ENCODE measurements at regions of chr4 and their contacts with region 1.

Region 1: DNA sequence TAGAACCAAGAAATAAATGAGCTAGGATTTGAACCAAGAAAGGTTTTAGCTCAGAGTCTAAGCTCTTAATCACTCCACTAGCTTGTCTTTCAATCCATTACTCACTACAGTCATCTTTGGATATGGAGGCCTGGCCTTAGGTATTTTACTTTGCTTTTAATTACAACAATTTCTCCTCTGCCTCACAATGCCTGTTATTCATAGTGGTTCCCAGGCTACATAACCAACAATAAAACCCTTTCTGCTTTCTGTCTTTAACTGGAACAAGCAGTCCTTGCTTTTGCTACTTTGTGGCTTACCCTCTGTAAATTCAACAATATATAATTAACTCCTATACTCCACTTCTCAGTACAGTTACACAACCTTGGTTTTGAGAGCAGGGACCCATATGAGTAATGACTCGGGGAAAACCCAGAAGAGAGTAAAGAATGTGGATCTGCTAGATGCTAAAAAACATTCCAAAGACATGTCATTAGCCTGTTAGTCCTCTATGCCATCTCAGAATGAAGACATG is 94.7 kb upstream of the NAP1L5 start:
- DNase-seq: no peak
- ATAC-seq: peak in 3 of 4 donors; percentile 32 to 46 (median 46)
- H3K4me3 ChIP-seq: no peak overlapping the region
- H3K27ac ChIP-seq: peak overlapping the region; percentile 2
- H3K4me1 ChIP-seq: peaks cover 8% of the 10 kb centered on the region
- H3K27me3 ChIP-seq: no peaks in the 10 kb centered on the region
- CTCF ChIP-seq: no peak

Region 2: DNA sequence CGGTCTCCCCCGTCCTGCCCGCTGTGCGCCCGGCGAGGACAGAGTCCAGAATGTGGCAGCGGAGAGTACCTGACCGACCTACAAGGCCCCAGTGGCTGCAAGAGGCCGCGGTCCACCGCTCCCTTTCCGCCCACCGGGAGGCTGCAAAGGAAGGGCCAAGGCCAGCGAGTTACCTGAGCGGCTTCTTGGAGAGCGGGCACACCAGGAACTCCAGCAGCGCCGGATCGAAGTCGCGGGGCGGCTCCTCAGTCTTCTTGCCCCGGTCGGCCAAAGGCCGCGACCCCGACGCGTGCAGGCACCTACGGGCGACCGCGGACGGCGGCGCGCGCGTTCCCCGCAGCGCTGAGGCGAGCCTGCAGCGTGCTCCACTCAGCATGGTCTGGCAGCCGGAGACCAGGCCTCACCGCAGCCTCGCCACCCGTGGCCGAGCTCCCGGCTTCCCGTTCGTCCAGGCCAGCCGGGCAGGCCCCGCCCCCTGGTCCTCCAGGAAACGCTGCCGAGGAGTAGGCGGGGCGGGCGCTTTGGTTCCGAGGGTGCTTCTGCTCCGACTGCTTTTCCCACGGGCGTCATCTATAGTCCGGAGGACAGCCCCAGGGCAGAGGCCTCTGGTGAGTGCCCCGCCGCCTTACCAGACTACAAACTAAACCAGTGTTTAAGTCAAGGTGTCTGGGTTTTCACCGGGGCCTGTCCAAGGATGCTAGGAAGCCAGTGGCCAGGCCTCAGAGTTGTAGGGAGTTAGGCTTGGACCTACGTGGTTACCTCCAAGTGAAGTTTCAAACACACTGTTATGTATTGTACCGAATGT is 268.8 kb before region 1 on chr4 and contains the start of gene PYURF:
- intact Hi-C with region 1: loop called in 1 of 2 experiments (anchors 10 kb)
- DNase-seq: peak; percentile 97
- ATAC-seq: peak; percentile 97 to 98 (median 97)
- H3K4me3 ChIP-seq: peak within 1 kb of the TSS; percentile 96
- H3K27ac ChIP-seq: peak within 1 kb of the TSS; percentile 95
- H3K4me1 ChIP-seq: peaks cover 12% of the 10 kb centered on the region
- H3K27me3 ChIP-seq: no peaks in the 10 kb centered on the region
- CTCF ChIP-seq: no peak
- total RNA-seq, gene PYURF: 51.8 to 82.8 (median 58.3) TPM

Region 3: GRCh38 chr4:88623097-88623496 is 169.2 kb before region 1 on chr4:
- intact Hi-C with region 1: no loop called
- DNase-seq: no peak
- ATAC-seq: peak in 3 of 4 donors; percentile 59 to 84 (median 63)
- H3K4me3 ChIP-seq: no peak overlapping the region
- H3K27ac ChIP-seq: no peak overlapping the region
- H3K4me1 ChIP-seq: peaks cover 28% of the 10 kb centered on the region
- H3K27me3 ChIP-seq: no peaks in the 10 kb centered on the region
- CTCF ChIP-seq: no peak

Region 4: DNA sequence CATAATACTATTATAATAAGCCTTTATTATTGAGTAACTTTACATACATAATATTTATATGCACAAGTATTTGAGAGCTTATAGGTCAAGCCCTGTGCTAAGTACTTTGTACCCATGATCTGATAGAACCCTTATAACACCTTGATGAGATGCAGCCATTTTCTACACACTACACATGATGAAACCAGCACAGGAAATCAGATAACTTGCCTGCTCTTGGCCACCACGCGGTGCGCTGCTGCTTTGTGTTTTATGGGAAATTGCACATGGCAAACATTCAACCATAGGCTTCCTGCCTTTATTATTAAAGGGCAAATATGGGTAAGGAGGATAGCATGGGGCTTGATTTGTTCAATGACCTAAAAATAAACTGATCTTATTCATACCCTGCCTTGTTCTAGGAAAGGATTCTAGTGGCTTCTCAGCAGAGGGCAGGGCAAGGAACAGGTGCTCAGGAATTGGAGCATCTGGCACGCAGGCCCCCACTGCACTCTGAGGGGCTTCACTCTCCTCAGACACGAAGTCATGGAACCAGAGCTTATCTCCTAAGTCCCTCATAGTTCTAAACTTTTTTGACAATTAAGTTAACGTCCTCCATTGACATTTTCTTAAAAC is 63.1 kb before region 1 on chr4:
- intact Hi-C with region 1: no loop called
- DNase-seq: no peak
- ATAC-seq: peak; percentile 55 to 86 (median 62)
- H3K4me3 ChIP-seq: no peak overlapping the region
- H3K27ac ChIP-seq: peak overlapping the region; percentile 56
- H3K4me1 ChIP-seq: peaks cover 49% of the 10 kb centered on the region
- H3K27me3 ChIP-seq: no peaks in the 10 kb centered on the region
- CTCF ChIP-seq: no peak

Region 5: GRCh38 chr4:88779431-88779830 is 12.9 kb before region 1 on chr4:
- intact Hi-C with region 1: no loop called
- DNase-seq: no peak
- ATAC-seq: no peak
- H3K4me3 ChIP-seq: no peak overlapping the region
- H3K27ac ChIP-seq: no peak overlapping the region
- H3K4me1 ChIP-seq: no peaks in the 10 kb centered on the region
- H3K27me3 ChIP-seq: no peaks in the 10 kb centered on the region
- CTCF ChIP-seq: no peak

Measured in psoas muscle (tissue), 8 donors.